ENCODE measurements at regions of chr13 and their contacts with region 1.

Region 1: GRCh38 chr13:80469853-80470381 is 129.0 kb upstream of the SPRY2 start:
- DNase-seq: no peak
- H3K4me3 Mint-ChIP-seq: no peak overlapping the region
- H3K27ac Mint-ChIP-seq: no peak overlapping the region
- H3K4me1 Mint-ChIP-seq: no peaks in the 10 kb centered on the region
- H3K27me3 Mint-ChIP-seq: no peaks in the 10 kb centered on the region

Region 2: GRCh38 chr13:80481588-80481987 is 11.7 kb after region 1 on chr13:
- CTCF ChIA-PET with region 1: no interaction called
- POLR2A ChIA-PET with region 1: no interaction called
- intact Hi-C with region 1: loop called (anchors 1 kb)
- DNase-seq: no peak
- H3K4me3 Mint-ChIP-seq: no peak overlapping the region
- H3K27ac Mint-ChIP-seq: no peak overlapping the region
- H3K4me1 Mint-ChIP-seq: no peaks in the 10 kb centered on the region
- H3K27me3 Mint-ChIP-seq: no peaks in the 10 kb centered on the region

Measured in activated CD4-positive, alpha-beta memory T cell treated with anti-CD3 and anti-CD28 coated beads for 36 hours (primary cell).